Naive thymus-derived CD4-positive, alpha-beta T cell (primary cell): ENCODE measurements at regions of chr15 and their contacts with region 1.

Region 1: GRCh38 chr15:74725845-74726773 is 781 bp upstream of the CYP1A1 start:
- DNase-seq: peak; percentile 22 to 65 (median 41)
- ATAC-seq: peak; percentile 80
- H3K4me3 ChIP-seq: peak overlapping the region; percentile 64
- H3K4me3 Mint-ChIP-seq: peak overlapping the region; percentile 71 to 86 (median 78)
- H3K27ac ChIP-seq: peak overlapping the region; percentile 42
- H3K27ac Mint-ChIP-seq: peak overlapping the region in 1 of 9 donors; percentile 8
- H3K4me1 ChIP-seq: peaks cover 3 to 6% of the 10 kb centered on the region in 2 donors
- H3K4me1 Mint-ChIP-seq: peaks cover 4 to 12% (median 7%) of the 10 kb centered on the region in 7 donors
- H3K27me3 ChIP-seq: no peaks in the 10 kb centered on the region
- H3K27me3 Mint-ChIP-seq: peaks cover 0 to 38% (median 7%) of the 10 kb centered on the region in 5 donors

Region 2: DNA sequence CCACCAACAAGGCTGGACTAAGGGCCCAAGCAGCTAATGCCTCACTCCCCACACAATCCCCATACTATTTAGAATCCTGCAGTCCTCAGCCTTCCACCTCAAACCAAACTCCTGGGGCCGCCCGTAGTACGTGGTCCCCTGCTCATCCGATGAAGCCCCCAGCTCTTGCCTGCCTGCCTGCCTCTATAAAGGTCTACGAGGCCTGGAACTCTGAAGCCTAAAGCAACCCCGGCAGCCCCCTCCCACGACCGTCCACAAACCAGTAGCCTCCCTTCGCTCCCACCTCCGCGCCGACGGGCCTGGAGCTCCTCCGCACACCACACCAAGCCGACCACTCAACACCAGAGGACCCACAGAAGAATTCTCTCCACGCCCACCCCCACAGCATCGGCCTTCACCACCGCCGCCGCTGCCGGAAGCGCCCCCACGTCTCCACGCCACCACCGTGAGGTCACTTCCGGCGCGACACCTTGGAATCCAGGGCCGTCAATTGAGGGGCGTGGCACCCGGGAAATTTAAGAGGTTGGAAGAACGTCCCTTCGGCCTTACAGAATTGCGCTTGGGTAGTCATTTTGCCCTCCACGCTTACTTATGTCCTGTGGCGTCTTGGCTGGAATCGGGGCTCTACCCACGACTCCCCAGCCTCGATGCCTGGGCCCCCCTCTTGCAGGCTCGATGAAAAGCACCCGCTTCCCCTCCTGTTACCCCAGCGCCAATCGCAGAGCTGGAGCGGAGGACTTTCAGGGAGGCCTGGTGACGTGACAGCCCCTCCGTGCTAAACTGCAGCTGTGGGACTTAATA is 30.3 kb before region 1 on chr15 and contains the start of gene EDC3:
- CTCF ChIA-PET with region 1: no interaction called
- POLR2A ChIA-PET with region 1: no interaction called
- intact Hi-C with region 1: loop called in 1 of 2 experiments (anchors 1 kb)
- DNase-seq: peak; percentile 69 to 87 (median 84)
- ATAC-seq: peak; percentile 93
- H3K4me3 ChIP-seq: peak within 1 kb of the TSS; percentile 71
- H3K4me3 Mint-ChIP-seq: peak within 1 kb of the TSS; percentile 96 to 100 (median 100)
- H3K27ac ChIP-seq: peak within 1 kb of the TSS; percentile 86
- H3K27ac Mint-ChIP-seq: peak within 1 kb of the TSS; percentile 97 to 100 (median 99)
- H3K4me1 ChIP-seq: peaks cover 12 to 14% of the 10 kb centered on the region in 2 donors
- H3K4me1 Mint-ChIP-seq: peaks cover 27 to 54% (median 48%) of the 10 kb centered on the region in 7 donors
- H3K27me3 ChIP-seq: no peaks in the 10 kb centered on the region
- H3K27me3 Mint-ChIP-seq: peaks cover 0 to 3% (median 0%) of the 10 kb centered on the region in 5 donors
- total RNA-seq, gene EDC3: 29.0 to 45.3 (median 38.7) TPM

Region 3: DNA sequence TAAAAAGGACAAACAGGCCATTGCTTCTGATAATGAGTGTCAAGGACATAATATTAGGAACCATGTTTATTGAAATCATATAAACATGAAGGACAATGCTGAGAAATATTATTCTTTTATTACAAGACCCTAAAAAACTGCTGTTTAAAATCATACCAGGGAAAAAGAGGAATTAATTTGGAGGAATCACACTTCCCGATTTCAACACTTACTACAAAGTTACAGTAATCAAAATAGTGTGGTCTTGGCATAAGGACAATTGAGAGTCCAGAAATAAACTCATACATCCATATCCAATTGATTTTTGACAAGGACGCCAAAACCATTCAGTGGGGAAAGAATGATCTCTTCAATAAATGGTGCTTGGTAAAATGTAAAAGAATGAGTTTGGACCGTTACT is 13.8 kb before region 1 on chr15:
- CTCF ChIA-PET with region 1: interaction called, 3 read pairs
- POLR2A ChIA-PET with region 1: interaction called, 3 read pairs
- intact Hi-C with region 1: loop called in 1 of 2 experiments (anchors 1 kb)
- DNase-seq: no peak
- ATAC-seq: no peak
- H3K4me3 ChIP-seq: no peak overlapping the region
- H3K4me3 Mint-ChIP-seq: no peak overlapping the region
- H3K27ac ChIP-seq: no peak overlapping the region
- H3K27ac Mint-ChIP-seq: no peak overlapping the region
- H3K4me1 ChIP-seq: no peaks in the 10 kb centered on the region
- H3K4me1 Mint-ChIP-seq: peaks cover 0 to 9% (median 4%) of the 10 kb centered on the region in 7 donors
- H3K27me3 ChIP-seq: no peaks in the 10 kb centered on the region
- H3K27me3 Mint-ChIP-seq: peaks cover 0 to 14% (median 0%) of the 10 kb centered on the region in 5 donors

Region 4: GRCh38 chr15:74808073-74808755 is 82.1 kb after region 1 on chr15:
- CTCF ChIA-PET with region 1: no interaction called
- POLR2A ChIA-PET with region 1: no interaction called
- intact Hi-C with region 1: no loop called
- DNase-seq: no peak
- ATAC-seq: no peak
- H3K4me3 ChIP-seq: no peak overlapping the region
- H3K4me3 Mint-ChIP-seq: peak overlapping the region in 2 of 10 donors; percentile 13 to 29
- H3K27ac ChIP-seq: peak overlapping the region; percentile 37
- H3K27ac Mint-ChIP-seq: peak overlapping the region; percentile 30 to 94 (median 85)
- H3K4me1 ChIP-seq: peaks cover 0 to 21% of the 10 kb centered on the region in 2 donors
- H3K4me1 Mint-ChIP-seq: peaks cover 19 to 40% (median 36%) of the 10 kb centered on the region in 7 donors
- H3K27me3 ChIP-seq: no peaks in the 10 kb centered on the region
- H3K27me3 Mint-ChIP-seq: no peaks in the 10 kb centered on the region

Region 5: GRCh38 chr15:75112848-75113492 is 386.9 kb after region 1 on chr15:
- CTCF ChIA-PET with region 1: no interaction called
- POLR2A ChIA-PET with region 1: no interaction called
- intact Hi-C with region 1: no loop called
- DNase-seq: no peak
- ATAC-seq: peak; percentile 18
- H3K4me3 ChIP-seq: no peak overlapping the region
- H3K4me3 Mint-ChIP-seq: no peak overlapping the region
- H3K27ac ChIP-seq: no peak overlapping the region
- H3K27ac Mint-ChIP-seq: no peak overlapping the region
- H3K4me1 ChIP-seq: peaks cover 0 to 23% of the 10 kb centered on the region in 2 donors
- H3K4me1 Mint-ChIP-seq: peaks cover 0 to 37% (median 5%) of the 10 kb centered on the region in 7 donors
- H3K27me3 ChIP-seq: no peaks in the 10 kb centered on the region
- H3K27me3 Mint-ChIP-seq: peaks cover 6 to 28% (median 14%) of the 10 kb centered on the region in 5 donors

Region 6: DNA sequence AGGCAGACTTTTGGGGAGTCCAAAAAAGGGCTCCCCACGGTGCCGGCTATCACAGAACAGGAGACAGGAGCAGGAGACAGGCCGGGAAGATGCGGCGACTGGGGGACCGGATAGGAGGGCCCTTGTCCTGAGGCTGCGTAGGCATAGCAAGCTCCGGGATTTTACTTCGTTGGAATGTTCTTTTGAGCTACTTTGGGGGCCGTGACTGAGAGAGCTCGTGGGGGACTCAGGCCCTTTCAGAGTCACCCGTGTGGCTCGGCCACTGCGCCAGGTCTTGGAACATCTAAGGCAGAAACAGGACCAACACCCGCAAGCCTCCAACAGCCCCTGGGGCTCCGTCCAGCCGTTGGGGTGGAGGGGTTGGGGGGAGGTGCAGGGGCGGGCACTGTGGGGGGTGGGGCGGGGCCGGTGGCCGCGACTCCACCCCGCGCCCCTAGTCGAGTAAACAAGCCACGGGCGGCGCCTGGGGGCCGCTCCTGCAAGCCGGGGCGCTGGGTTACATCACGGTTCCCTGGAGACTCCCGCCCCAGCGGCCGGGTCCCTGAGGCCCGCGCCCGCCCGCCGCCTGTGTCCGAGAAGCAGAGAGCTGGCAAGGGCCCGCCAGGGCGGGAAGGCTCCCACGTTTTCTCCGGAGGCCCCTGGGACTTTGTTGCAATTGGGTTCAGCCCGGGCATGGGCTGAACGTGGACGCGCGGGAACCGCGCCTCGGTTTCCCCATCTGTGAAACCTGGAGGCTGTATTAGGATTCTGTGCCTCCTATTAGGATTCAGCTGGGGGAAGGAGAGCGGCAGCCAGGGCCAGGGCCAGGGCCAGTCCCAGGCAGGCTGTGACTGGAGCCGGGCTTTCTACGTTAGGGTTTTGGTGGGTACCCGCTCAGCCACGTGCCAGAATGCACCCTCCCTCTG is 452.3 kb after region 1 on chr15:
- CTCF ChIA-PET with region 1: no interaction called
- POLR2A ChIA-PET with region 1: no interaction called
- intact Hi-C with region 1: no loop called
- DNase-seq: peak in 1 of 9 donors; percentile 4
- ATAC-seq: peak; percentile 52
- H3K4me3 ChIP-seq: no peak overlapping the region
- H3K4me3 Mint-ChIP-seq: peak overlapping the region in 6 of 10 donors; percentile 6 to 56 (median 44)
- H3K27ac ChIP-seq: no peak overlapping the region
- H3K27ac Mint-ChIP-seq: peak overlapping the region in 1 of 9 donors; percentile 14
- H3K4me1 ChIP-seq: no peaks in the 10 kb centered on the region
- H3K4me1 Mint-ChIP-seq: peaks cover 4 to 28% (median 7%) of the 10 kb centered on the region in 7 donors
- H3K27me3 ChIP-seq: peaks cover 0 to 7% of the 10 kb centered on the region in 2 donors
- H3K27me3 Mint-ChIP-seq: peaks cover 28 to 54% (median 40%) of the 10 kb centered on the region in 5 donors